Left cardiac atrium (tissue), 4 donors: ENCODE measurements at regions of chr15 and their contacts with region 1.

Region 1: DNA sequence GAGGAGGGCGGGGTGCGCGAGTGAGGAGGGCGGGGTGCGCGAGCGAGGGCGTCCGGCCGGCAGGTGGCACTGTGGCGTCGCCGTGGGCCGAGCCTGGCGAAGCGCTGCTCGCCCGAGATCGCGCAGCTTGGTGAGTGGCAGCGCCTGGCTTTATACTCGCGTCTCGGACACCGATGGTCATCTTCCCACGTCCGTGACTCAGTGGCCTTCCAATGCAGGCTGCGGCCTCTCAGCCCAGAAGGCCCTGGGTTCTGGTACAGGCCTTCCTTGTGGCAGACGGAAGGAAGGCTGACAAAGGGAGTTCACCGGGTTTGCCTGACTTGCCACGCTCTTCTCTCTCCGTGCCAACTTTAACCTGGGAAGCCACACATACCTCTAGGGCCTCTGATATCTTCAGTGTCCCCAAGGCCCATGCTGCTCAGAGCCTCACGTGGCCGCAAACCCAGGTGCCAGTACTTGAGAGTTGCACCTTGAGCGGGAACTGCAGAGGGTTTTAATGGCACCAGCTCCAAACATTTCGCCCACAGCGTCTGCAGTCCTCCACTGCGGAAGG is 195.3 kb upstream of the LYSMD4 start:
- DNase-seq: peak; percentile 76
- ATAC-seq: peak; percentile 93

Region 2: DNA sequence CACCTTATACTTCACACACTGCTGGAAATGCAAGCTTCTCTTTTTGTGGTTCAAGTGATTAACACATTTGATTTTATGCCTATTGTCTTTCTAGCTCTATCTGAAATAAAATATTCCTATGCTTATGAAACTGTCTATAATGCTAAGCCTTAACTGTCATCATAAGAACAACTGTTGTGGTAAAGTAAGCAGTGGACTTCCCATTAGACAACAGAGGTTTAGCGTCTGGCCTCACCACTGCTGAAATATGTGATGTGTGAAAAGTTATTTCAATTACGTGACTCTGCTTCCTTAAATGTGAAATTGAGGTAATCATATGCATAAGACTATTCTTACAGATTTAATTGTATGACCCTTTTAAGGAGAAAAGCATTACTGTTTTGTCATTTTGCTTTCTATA is 55.1 kb before region 1 on chr15:
- intact Hi-C with region 1: no loop called
- DNase-seq: no peak
- ATAC-seq: no peak

Region 3: DNA sequence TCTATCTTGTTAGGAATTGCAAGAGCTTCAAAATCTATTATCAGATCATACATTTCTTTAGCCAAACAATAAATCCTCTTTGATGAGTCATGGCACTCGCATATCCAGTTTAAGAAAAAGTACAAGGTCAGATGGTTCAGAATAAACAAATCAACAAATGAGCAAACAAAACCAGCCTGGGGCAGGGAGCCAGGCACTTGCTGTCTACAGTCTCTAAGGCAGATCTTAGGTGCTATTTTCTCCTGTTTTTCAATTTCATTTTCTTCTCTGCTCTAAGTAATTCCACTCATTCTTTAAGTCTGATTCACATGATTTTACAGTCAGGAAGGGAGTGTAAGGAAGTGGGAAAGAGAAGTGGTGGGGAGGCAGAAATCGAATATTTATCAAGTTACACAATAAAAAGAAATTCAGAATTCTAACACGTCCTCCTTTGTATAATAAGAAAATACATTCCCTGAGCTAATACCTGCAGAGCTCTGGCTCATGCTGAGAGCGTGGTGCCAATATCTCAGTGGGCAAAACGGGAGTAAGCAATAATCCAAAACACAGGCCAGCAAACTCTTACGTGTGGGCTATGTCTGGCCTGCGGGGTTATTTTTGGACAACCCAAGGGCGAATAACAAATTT is 114.6 kb after region 1 on chr15:
- intact Hi-C with region 1: no loop called
- DNase-seq: no peak
- ATAC-seq: peak in 1 of 2 donors; percentile 92

Region 4: GRCh38 chr15:100131321-100132224 is 203.1 kb after region 1 on chr15:
- intact Hi-C with region 1: loop called in 1 of 2 experiments (anchors 10 kb)
- DNase-seq: peak; percentile 72
- ATAC-seq: peak; percentile 92 to 93